CD4-positive, alpha-beta T cell (primary cell): ENCODE measurements at regions of chr3 and their contacts with region 1.

Region 1: GRCh38 chr3:133661454-133662277 is at the start of gene TOPBP1:
- DNase-seq: peak; percentile 70 to 92 (median 81)
- ATAC-seq: peak; percentile 85
- H3K4me3 ChIP-seq: peak within 1 kb of the TSS; percentile 72
- H3K4me3 Mint-ChIP-seq: peak within 1 kb of the TSS; percentile 97
- H3K27ac ChIP-seq: peak within 1 kb of the TSS; percentile 58 to 73
- H3K27ac Mint-ChIP-seq: peak within 1 kb of the TSS; percentile 95
- H3K4me1 ChIP-seq: peaks cover 26% of the 10 kb centered on the region
- H3K4me1 Mint-ChIP-seq: peaks cover 45% of the 10 kb centered on the region
- H3K27me3 ChIP-seq: no peaks in the 10 kb centered on the region
- H3K27me3 Mint-ChIP-seq: no peaks in the 10 kb centered on the region
- CTCF ChIP-seq: no peak
- total RNA-seq, gene TOPBP1: 29.1 to 32.4 TPM

Region 2: DNA sequence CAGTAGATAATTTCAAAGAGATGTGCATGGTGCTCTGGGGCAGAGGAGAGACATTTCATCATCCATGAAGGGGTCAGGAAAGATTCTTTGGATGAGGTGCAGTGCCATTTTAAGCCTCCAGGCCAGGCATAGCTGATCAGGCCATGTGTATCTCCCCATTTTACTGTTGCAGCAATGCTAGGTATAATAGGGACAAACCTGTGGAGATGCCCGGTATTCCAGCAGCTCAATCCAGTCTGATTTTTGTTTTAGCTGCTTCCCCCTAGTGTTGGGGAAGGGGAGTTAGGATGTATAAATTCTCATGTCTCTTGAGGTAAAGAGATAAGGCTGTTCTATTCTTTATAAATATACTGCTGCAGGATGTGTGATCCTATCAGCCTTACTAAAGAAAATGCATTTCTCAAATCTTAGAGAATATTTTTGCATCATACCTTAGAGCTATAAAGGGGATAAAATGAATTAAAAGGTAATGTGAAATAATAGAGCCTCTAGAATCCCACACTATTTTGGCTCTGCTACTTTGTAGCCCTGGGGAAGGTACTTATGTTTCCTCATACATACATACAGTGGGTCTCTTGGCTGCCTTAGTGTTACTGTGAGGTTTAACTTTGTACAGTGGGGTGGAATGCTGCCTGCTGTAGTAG is 83.0 kb before region 1 on chr3:
- CTCF ChIA-PET with region 1: no interaction called
- POLR2A ChIA-PET with region 1: interaction called, 33 read pairs
- intact Hi-C with region 1: loop called (anchors 2 kb)
- DNase-seq: peak in 3 of 14 experiments; percentile 17 to 38 (median 26)
- ATAC-seq: no peak
- H3K4me3 ChIP-seq: no peak overlapping the region
- H3K4me3 Mint-ChIP-seq: peak overlapping the region; percentile 82
- H3K27ac ChIP-seq: peak overlapping the region in 1 of 2 donors; percentile 19
- H3K27ac Mint-ChIP-seq: peak overlapping the region; percentile 99
- H3K4me1 ChIP-seq: peaks cover 54% of the 10 kb centered on the region
- H3K4me1 Mint-ChIP-seq: peaks cover 74% of the 10 kb centered on the region
- H3K27me3 ChIP-seq: no peaks in the 10 kb centered on the region
- H3K27me3 Mint-ChIP-seq: no peaks in the 10 kb centered on the region
- CTCF ChIP-seq: peak; percentile 71

Region 3: GRCh38 chr3:133805527-133806475 is 144.1 kb after region 1 on chr3 and contains the start of gene SRPRB:
- CTCF ChIA-PET with region 1: interaction called, 3 read pairs
- POLR2A ChIA-PET with region 1: interaction called, 3 read pairs
- intact Hi-C with region 1: loop called (anchors 1 to 2 kb)
- DNase-seq: peak; percentile 90 to 99 (median 94)
- ATAC-seq: peak; percentile 95
- H3K4me3 ChIP-seq: peak within 1 kb of the TSS; percentile 92
- H3K4me3 Mint-ChIP-seq: peak within 1 kb of the TSS; percentile 97
- H3K27ac ChIP-seq: peak within 1 kb of the TSS; percentile 70 to 75
- H3K27ac Mint-ChIP-seq: peak within 1 kb of the TSS; percentile 94
- H3K4me1 ChIP-seq: peaks cover 16% of the 10 kb centered on the region
- H3K4me1 Mint-ChIP-seq: peaks cover 40% of the 10 kb centered on the region
- H3K27me3 ChIP-seq: no peaks in the 10 kb centered on the region
- H3K27me3 Mint-ChIP-seq: no peaks in the 10 kb centered on the region
- CTCF ChIP-seq: no peak
- total RNA-seq, gene SRPRB: 19.1 to 19.9 TPM

Region 4: GRCh38 chr3:133927540-133928066 is 265.9 kb after region 1 on chr3:
- CTCF ChIA-PET with region 1: no interaction called
- POLR2A ChIA-PET with region 1: no interaction called
- intact Hi-C with region 1: loop called (anchors 5 kb)
- DNase-seq: peak; percentile 47 to 90 (median 68)
- ATAC-seq: peak; percentile 97
- H3K4me3 ChIP-seq: peak overlapping the region; percentile 51
- H3K4me3 Mint-ChIP-seq: peak overlapping the region; percentile 80
- H3K27ac ChIP-seq: no peak overlapping the region
- H3K27ac Mint-ChIP-seq: no peak overlapping the region
- H3K4me1 ChIP-seq: peaks cover 14% of the 10 kb centered on the region
- H3K4me1 Mint-ChIP-seq: peaks cover 7% of the 10 kb centered on the region
- H3K27me3 ChIP-seq: peaks cover 0 to 9% of the 10 kb centered on the region in 2 experiments
- H3K27me3 Mint-ChIP-seq: peaks cover 18% of the 10 kb centered on the region
- CTCF ChIP-seq: peak; percentile 54

Region 5: GRCh38 chr3:134485718-134486576 is 824.3 kb after region 1 on chr3 and contains the starts of genes ANAPC13 and CEP63:
- CTCF ChIA-PET with region 1: no interaction called
- POLR2A ChIA-PET with region 1: no interaction called
- intact Hi-C with region 1: loop called in 1 of 2 experiments (anchors 5 kb)
- DNase-seq: peak; percentile 84 to 99 (median 90)
- ATAC-seq: peak; percentile 76
- H3K4me3 ChIP-seq: peak within 1 kb of the TSS; percentile 96
- H3K4me3 Mint-ChIP-seq: peak within 1 kb of the TSS; percentile 100
- H3K27ac ChIP-seq: peak within 1 kb of the TSS; percentile 86 to 95
- H3K27ac Mint-ChIP-seq: peak within 1 kb of the TSS; percentile 98
- H3K4me1 ChIP-seq: peaks cover 29% of the 10 kb centered on the region
- H3K4me1 Mint-ChIP-seq: peaks cover 71% of the 10 kb centered on the region
- H3K27me3 ChIP-seq: no peaks in the 10 kb centered on the region
- H3K27me3 Mint-ChIP-seq: no peaks in the 10 kb centered on the region
- CTCF ChIP-seq: no peak
- total RNA-seq, gene ANAPC13: 12.9 to 16.8 TPM
- total RNA-seq, gene CEP63: 13.2 to 15.1 TPM

Region 6: DNA sequence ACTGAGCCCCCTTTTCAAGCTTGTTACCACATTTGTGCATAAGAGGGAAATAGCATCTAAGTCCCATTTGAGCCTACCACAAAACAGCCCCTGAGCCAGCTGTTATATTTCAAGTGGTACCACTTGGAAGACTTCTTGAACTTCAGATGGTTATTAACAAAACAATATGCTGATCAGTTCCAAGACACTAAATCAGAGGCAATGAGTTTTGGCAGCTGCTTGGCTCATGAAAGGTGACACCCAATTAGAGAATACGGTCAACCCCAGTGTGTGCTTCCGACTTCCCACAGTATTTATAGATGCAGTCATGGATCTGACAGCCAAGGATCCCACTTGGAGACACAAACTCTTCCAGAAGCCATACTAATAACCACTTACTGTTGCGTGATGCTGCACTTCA is 1834.2 kb after region 1 on chr3:
- CTCF ChIA-PET with region 1: no interaction called
- POLR2A ChIA-PET with region 1: no interaction called
- intact Hi-C with region 1: no loop called
- DNase-seq: no peak
- ATAC-seq: no peak
- H3K4me3 ChIP-seq: no peak overlapping the region
- H3K4me3 Mint-ChIP-seq: no peak overlapping the region
- H3K27ac ChIP-seq: no peak overlapping the region
- H3K27ac Mint-ChIP-seq: no peak overlapping the region
- H3K4me1 ChIP-seq: no peaks in the 10 kb centered on the region
- H3K4me1 Mint-ChIP-seq: no peaks in the 10 kb centered on the region
- H3K27me3 ChIP-seq: no peaks in the 10 kb centered on the region
- H3K27me3 Mint-ChIP-seq: no peaks in the 10 kb centered on the region
- CTCF ChIP-seq: no peak